WTC11 (cell line): ENCODE measurements at regions of chr17 and their contacts with region 1.

Region 1: DNA sequence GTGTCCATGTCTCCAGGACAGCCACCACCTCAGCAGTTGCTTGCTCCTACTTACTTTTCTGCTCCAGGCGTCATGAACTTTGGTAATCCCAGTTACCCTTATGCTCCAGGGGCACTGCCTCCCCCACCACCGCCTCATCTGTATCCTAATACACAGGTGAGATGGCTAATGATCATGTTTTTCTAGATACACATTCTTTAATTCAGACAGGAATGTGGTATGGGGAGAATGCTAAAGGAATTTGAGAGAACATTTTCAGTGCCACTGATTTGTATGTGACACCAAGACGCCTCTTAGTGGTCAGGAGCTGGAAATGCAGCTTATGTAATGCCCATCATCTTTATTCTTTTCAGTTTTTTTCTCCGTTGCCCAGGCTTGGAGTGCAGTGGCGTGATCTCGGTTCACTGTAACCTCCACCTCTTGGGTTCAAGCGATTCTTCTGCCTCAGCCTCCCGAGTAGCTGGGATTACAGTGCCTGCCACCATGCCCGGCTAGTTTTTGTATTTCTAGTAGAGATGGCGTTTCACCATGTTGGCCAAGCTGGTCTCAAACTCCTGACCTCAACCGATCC is 8.9 kb upstream of the RAPGEFL1 start:
- DNase-seq: no peak
- ATAC-seq: peak; percentile 84
- H3K4me3 Mint-ChIP-seq: no peak overlapping the region
- H3K27ac Mint-ChIP-seq: peak overlapping the region; percentile 98
- H3K4me1 Mint-ChIP-seq: peaks cover 5% of the 10 kb centered on the region
- H3K27me3 Mint-ChIP-seq: no peaks in the 10 kb centered on the region; the same call in 1 of the 2 replicates
- CTCF ChIP-seq: no peak; the same call in 1 of the 2 replicates

Region 2: DNA sequence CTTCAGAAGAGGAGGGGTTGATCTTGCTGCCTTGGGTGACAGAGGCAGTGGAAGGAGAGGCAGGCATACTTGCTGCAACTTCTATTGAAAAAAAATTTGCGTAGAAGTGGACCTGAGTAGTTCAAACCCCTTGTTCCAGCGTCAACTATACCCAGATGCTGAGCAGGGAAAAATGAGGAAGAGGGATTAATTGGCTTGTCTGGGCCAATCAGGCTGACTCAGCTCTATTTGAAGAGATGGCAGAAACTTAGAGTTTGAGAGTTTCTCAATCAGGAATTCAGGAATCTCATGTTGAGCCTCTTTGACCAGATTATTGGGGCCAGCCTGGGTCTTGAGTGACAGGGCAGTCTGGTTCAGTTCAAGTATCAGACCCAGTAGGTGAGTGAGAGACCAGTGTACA is 10.4 kb before region 1 on chr17:
- CTCF ChIA-PET with region 1: interaction called, 14 read pairs
- POLR2A ChIA-PET with region 1: interaction called, 3 read pairs
- DNase-seq: no peak
- ATAC-seq: no peak
- H3K4me3 Mint-ChIP-seq: no peak overlapping the region
- H3K27ac Mint-ChIP-seq: no peak overlapping the region; the same call in 1 of the 2 replicates
- H3K4me1 Mint-ChIP-seq: no peaks in the 10 kb centered on the region
- H3K27me3 Mint-ChIP-seq: no peaks in the 10 kb centered on the region
- CTCF ChIP-seq: no peak

Region 3: DNA sequence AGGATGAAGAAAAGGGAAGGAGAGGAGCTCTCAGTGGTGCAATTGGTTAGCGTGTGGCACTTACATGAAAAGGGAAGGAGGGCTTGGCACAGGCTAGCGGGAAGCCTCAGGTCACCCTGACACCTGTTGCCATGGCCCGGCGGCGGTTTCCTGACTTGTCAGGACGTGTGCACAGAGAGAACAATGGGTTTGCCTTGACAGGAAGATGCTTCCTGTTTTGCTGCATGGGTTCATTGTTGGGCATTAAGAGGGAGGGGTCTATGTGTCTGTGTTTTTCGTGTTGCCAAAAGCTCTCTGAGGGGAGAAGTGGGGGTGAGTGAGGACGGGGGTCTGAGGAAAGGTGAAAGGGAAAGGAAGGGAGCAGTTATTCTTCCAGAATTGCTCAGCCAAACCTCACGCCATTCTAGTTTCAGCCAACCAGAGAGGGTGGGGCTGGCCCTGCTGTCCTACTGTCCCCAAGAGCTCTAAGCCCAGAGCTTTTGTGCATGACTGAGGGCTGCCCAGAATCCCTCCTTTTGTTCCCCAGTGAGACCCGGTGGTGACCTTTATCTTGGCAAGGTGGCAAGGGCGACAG is 414.1 kb after region 1 on chr17:
- CTCF ChIA-PET with region 1: no interaction called
- POLR2A ChIA-PET with region 1: no interaction called
- DNase-seq: no peak
- ATAC-seq: no peak; the same call in 1 of the 2 replicates
- H3K4me3 Mint-ChIP-seq: no peak overlapping the region
- H3K27ac Mint-ChIP-seq: no peak overlapping the region
- H3K4me1 Mint-ChIP-seq: peaks cover 7% of the 10 kb centered on the region
- H3K27me3 Mint-ChIP-seq: peaks cover 15% of the 10 kb centered on the region
- CTCF ChIP-seq: no peak